Activated naive CD4-positive, alpha-beta T cell treated with anti-CD3 and anti-CD28 coated beads for 36 hours (primary cell): ENCODE measurements at regions of chr9 and their contacts with region 1.

Region 1: GRCh38 chr9:27573634-27574590 is 631 bp upstream of the C9orf72 start:
- DNase-seq: peak; percentile 99
- H3K4me3 Mint-ChIP-seq: peak overlapping the region; percentile 83
- H3K27ac Mint-ChIP-seq: peak overlapping the region; percentile 100
- H3K4me1 Mint-ChIP-seq: peaks cover 37% of the 10 kb centered on the region
- H3K27me3 Mint-ChIP-seq: no peaks in the 10 kb centered on the region

Region 2: GRCh38 chr9:26946753-26947727 is 626.9 kb before region 1 on chr9 and contains the start of gene PLAA:
- CTCF ChIA-PET with region 1: no interaction called
- intact Hi-C with region 1: loop called (anchors 1 kb)
- DNase-seq: peak; percentile 90
- H3K4me3 Mint-ChIP-seq: peak within 1 kb of the TSS; percentile 89
- H3K27ac Mint-ChIP-seq: peak within 1 kb of the TSS; percentile 97
- H3K4me1 Mint-ChIP-seq: peaks cover 42% of the 10 kb centered on the region
- H3K27me3 Mint-ChIP-seq: no peaks in the 10 kb centered on the region
- total RNA-seq, gene PLAA: 29.9 to 30.6 TPM

Region 3: GRCh38 chr9:27333241-27334052 is 240.5 kb before region 1 on chr9:
- CTCF ChIA-PET with region 1: interaction called, 4 read pairs
- intact Hi-C with region 1: loop called (anchors 1 kb)
- DNase-seq: peak; percentile 65
- H3K4me3 Mint-ChIP-seq: no peak overlapping the region
- H3K27ac Mint-ChIP-seq: no peak overlapping the region
- H3K4me1 Mint-ChIP-seq: peaks cover 6% of the 10 kb centered on the region
- H3K27me3 Mint-ChIP-seq: peaks cover 2% of the 10 kb centered on the region

Region 4: DNA sequence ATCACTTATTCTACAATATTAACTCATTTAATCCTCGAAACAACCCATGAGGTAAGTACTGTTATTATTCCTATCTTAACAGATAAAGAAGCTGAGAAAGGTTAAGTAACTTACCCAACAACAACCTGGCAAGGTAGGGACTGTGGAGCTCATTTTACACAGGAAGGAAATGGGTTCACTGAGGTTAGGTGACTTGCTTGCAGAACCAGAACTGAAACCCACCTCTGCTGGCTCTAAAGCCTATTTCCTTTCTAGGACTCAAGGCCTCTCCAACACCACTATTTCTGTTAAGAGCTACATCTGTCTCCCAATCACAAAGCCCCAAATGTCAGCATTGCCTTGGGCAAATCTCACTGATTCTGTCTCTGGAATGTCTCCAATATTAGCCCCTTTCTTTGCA is 88.8 kb before region 1 on chr9:
- CTCF ChIA-PET with region 1: no interaction called
- intact Hi-C with region 1: no loop called
- DNase-seq: peak; percentile 18
- H3K4me3 Mint-ChIP-seq: no peak overlapping the region
- H3K27ac Mint-ChIP-seq: no peak overlapping the region
- H3K4me1 Mint-ChIP-seq: peaks cover 25% of the 10 kb centered on the region
- H3K27me3 Mint-ChIP-seq: no peaks in the 10 kb centered on the region

Region 5: GRCh38 chr9:27505744-27506161 is 68.2 kb before region 1 on chr9:
- CTCF ChIA-PET with region 1: no interaction called
- intact Hi-C with region 1: loop called (anchors 1 kb)
- DNase-seq: peak; percentile 65
- H3K4me3 Mint-ChIP-seq: no peak overlapping the region
- H3K27ac Mint-ChIP-seq: peak overlapping the region; percentile 17
- H3K4me1 Mint-ChIP-seq: peaks cover 52% of the 10 kb centered on the region
- H3K27me3 Mint-ChIP-seq: peaks cover 1% of the 10 kb centered on the region

Region 6: GRCh38 chr9:27600256-27600655 is 26.3 kb after region 1 on chr9:
- CTCF ChIA-PET with region 1: no interaction called
- intact Hi-C with region 1: no loop called
- DNase-seq: no peak
- H3K4me3 Mint-ChIP-seq: no peak overlapping the region
- H3K27ac Mint-ChIP-seq: no peak overlapping the region
- H3K4me1 Mint-ChIP-seq: no peaks in the 10 kb centered on the region
- H3K27me3 Mint-ChIP-seq: peaks cover 2% of the 10 kb centered on the region

Region 7: GRCh38 chr9:27726244-27727081 is 152.6 kb after region 1 on chr9:
- CTCF ChIA-PET with region 1: no interaction called
- intact Hi-C with region 1: no loop called
- DNase-seq: peak; percentile 75
- H3K4me3 Mint-ChIP-seq: no peak overlapping the region
- H3K27ac Mint-ChIP-seq: no peak overlapping the region
- H3K4me1 Mint-ChIP-seq: no peaks in the 10 kb centered on the region
- H3K27me3 Mint-ChIP-seq: peaks cover 9% of the 10 kb centered on the region

Region 8: GRCh38 chr9:27785714-27786100 is 211.8 kb after region 1 on chr9:
- CTCF ChIA-PET with region 1: no interaction called
- intact Hi-C with region 1: loop called (anchors 2 kb)
- DNase-seq: no peak
- H3K4me3 Mint-ChIP-seq: no peak overlapping the region
- H3K27ac Mint-ChIP-seq: no peak overlapping the region
- H3K4me1 Mint-ChIP-seq: peaks cover 9% of the 10 kb centered on the region
- H3K27me3 Mint-ChIP-seq: peaks cover 17% of the 10 kb centered on the region